Sigmoid colon (tissue), 7 donors: ENCODE measurements at regions of chr1 and their contacts with region 1.

Region 1: GRCh38 chr1:68232354-68233148 is at the start of gene WLS:
- DNase-seq: peak; percentile 93
- H3K4me3 ChIP-seq: peak within 1 kb of the TSS; percentile 79 to 93 (median 84)
- H3K27ac ChIP-seq: peak within 1 kb of the TSS; percentile 94 to 97 (median 94)
- H3K4me1 ChIP-seq: peaks cover 0 to 36% (median 15%) of the 10 kb centered on the region in 4 donors
- H3K27me3 ChIP-seq: no peaks in the 10 kb centered on the region
- CTCF ChIP-seq: peak in 1 of 4 experiments; percentile 18
- EP300 ChIP-seq: no peak
- POLR2A ChIP-seq: peak; percentile 81 to 92
- total RNA-seq, gene WLS: 99.2 to 188 (median 134) TPM

Region 2: GRCh38 chr1:68120136-68120791 is 112.3 kb before region 1 on chr1:
- intact Hi-C with region 1: loop called (anchors 1 kb)
- DNase-seq: no peak
- H3K4me3 ChIP-seq: no peak overlapping the region
- H3K27ac ChIP-seq: peak overlapping the region; percentile 67 to 75 (median 73)
- H3K4me1 ChIP-seq: peaks cover 0 to 26% (median 15%) of the 10 kb centered on the region in 4 donors
- H3K27me3 ChIP-seq: no peaks in the 10 kb centered on the region
- CTCF ChIP-seq: peak; percentile 48 to 87 (median 84)
- EP300 ChIP-seq: no peak
- POLR2A ChIP-seq: no peak

Region 3: DNA sequence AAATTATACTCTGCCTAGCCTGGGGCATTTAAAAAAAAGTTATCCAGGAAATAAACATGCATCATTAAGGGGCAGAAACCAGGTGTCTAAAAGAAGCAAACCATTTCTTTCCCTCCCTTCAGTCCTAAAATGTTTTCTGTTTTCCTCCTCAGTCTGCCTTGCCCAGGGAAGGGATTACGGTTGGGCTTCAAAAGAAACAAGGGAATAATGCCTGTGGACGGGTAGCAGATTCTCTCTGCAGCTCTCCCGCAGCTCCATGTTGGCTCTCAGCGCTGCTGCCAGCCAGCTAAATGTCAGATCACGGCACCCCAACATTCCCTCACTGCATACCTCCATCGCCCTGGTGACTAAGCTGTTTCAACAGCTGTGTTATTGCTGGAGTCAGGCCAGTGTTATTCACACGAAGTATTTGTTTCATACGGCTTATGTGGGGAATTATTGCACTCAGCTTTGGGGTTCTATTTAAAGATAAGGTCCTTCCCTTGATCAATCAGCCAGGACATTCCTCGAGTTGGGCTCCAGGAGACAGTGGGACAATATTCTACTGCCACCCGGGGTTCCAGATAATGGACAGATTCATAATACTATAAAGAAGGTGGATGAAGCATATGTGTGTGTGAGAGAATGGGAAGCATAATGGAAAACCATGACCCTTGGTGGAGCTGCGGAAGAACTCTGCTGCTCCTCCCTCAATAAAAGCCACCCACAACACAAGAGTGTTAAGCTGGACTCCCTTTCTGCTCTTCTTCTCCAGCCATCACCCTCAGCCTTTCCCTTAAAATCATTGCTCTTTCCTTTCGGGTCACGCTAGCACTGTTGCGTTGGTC is 58.4 kb before region 1 on chr1:
- intact Hi-C with region 1: loop called (anchors 2 kb)
- DNase-seq: peak; percentile 86
- H3K4me3 ChIP-seq: peak overlapping the region in 3 of 4 donors; percentile 1 to 18 (median 13)
- H3K27ac ChIP-seq: peak overlapping the region; percentile 71 to 86 (median 80)
- H3K4me1 ChIP-seq: peaks cover 0 to 67% (median 60%) of the 10 kb centered on the region in 4 donors
- H3K27me3 ChIP-seq: no peaks in the 10 kb centered on the region
- CTCF ChIP-seq: no peak
- EP300 ChIP-seq: no peak
- POLR2A ChIP-seq: no peak

Region 4: GRCh38 chr1:68281946-68282615 is 49.5 kb after region 1 on chr1:
- intact Hi-C with region 1: no loop called
- DNase-seq: no peak
- H3K4me3 ChIP-seq: no peak overlapping the region
- H3K27ac ChIP-seq: no peak overlapping the region
- H3K4me1 ChIP-seq: no peaks in the 10 kb centered on the region
- H3K27me3 ChIP-seq: no peaks in the 10 kb centered on the region
- CTCF ChIP-seq: no peak
- EP300 ChIP-seq: no peak
- POLR2A ChIP-seq: no peak

Region 5: DNA sequence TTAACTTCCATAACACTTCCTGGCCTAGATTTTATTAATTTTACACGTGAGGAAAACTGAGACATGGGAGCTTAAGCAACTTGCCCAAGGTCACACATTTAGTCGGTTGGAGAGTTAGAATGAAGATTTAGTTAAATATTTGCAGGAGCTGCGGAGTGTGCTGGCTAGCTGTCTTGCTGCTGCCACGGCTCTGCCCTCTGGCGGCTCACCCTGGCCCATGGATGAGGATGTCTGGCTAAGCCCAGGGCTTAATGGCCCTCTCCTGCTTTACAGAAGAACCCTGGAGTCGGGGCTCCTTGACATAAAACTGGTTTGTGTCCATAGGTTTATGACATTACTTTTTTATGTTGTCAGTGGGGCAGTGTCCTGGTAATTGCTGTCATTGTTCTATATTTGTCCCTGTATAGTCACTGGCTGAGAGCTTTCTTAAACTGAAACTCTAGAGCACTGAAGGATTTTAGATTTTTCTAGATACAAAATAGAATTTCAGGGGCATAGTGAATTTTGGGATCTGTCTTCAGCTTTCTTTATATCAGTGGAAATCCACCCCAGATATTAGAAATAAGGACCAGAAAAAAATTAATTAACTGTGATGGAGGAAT is 88.6 kb after region 1 on chr1:
- intact Hi-C with region 1: loop called (anchors 2 kb)
- DNase-seq: peak; percentile 87
- H3K4me3 ChIP-seq: no peak overlapping the region
- H3K27ac ChIP-seq: peak overlapping the region; percentile 70 to 82 (median 78)
- H3K4me1 ChIP-seq: peaks cover 0 to 47% (median 23%) of the 10 kb centered on the region in 4 donors
- H3K27me3 ChIP-seq: no peaks in the 10 kb centered on the region
- CTCF ChIP-seq: peak; percentile 22 to 81 (median 76)
- EP300 ChIP-seq: no peak
- POLR2A ChIP-seq: no peak